Activated CD4-positive, alpha-beta memory T cell treated with anti-CD3 and anti-CD28 coated beads, Interleukin-2, amount 10 ng/mL, durations not matched to agents 7 days and 5 days (primary cell): ENCODE measurements at regions of chr17 and their contacts with region 1.

Region 1: GRCh38 chr17:43316522-43317142 is 82.2 kb upstream of the ARL4D start:
- DNase-seq: peak; percentile 43
- H3K4me3 Mint-ChIP-seq: no peak overlapping the region
- H3K27ac Mint-ChIP-seq: peak overlapping the region; percentile 61
- H3K4me1 Mint-ChIP-seq: peaks cover 17% of the 10 kb centered on the region
- H3K27me3 Mint-ChIP-seq: no peaks in the 10 kb centered on the region

Region 2: GRCh38 chr17:43006639-43007551 is 309.7 kb before region 1 on chr17 and contains the start of gene IFI35:
- CTCF ChIA-PET with region 1: interaction called, 4 read pairs
- POLR2A ChIA-PET with region 1: interaction called, 12 read pairs
- DNase-seq: peak; percentile 92
- H3K4me3 Mint-ChIP-seq: peak within 1 kb of the TSS; percentile 100
- H3K27ac Mint-ChIP-seq: peak within 1 kb of the TSS; percentile 100
- H3K4me1 Mint-ChIP-seq: peaks cover 34% of the 10 kb centered on the region
- H3K27me3 Mint-ChIP-seq: no peaks in the 10 kb centered on the region
- total RNA-seq, gene IFI35: 149 to 154 TPM

Region 3: GRCh38 chr17:43125133-43125966 is 191.3 kb before region 1 on chr17 and contains the start of gene BRCA1:
- CTCF ChIA-PET with region 1: no interaction called
- POLR2A ChIA-PET with region 1: interaction called, 41 read pairs
- DNase-seq: peak; percentile 96
- H3K4me3 Mint-ChIP-seq: peak within 1 kb of the TSS; percentile 100
- H3K27ac Mint-ChIP-seq: peak within 1 kb of the TSS; percentile 91
- H3K4me1 Mint-ChIP-seq: peaks cover 38% of the 10 kb centered on the region
- H3K27me3 Mint-ChIP-seq: no peaks in the 10 kb centered on the region
- total RNA-seq, gene BRCA1: 62.5 to 66.5 TPM

Region 4: DNA sequence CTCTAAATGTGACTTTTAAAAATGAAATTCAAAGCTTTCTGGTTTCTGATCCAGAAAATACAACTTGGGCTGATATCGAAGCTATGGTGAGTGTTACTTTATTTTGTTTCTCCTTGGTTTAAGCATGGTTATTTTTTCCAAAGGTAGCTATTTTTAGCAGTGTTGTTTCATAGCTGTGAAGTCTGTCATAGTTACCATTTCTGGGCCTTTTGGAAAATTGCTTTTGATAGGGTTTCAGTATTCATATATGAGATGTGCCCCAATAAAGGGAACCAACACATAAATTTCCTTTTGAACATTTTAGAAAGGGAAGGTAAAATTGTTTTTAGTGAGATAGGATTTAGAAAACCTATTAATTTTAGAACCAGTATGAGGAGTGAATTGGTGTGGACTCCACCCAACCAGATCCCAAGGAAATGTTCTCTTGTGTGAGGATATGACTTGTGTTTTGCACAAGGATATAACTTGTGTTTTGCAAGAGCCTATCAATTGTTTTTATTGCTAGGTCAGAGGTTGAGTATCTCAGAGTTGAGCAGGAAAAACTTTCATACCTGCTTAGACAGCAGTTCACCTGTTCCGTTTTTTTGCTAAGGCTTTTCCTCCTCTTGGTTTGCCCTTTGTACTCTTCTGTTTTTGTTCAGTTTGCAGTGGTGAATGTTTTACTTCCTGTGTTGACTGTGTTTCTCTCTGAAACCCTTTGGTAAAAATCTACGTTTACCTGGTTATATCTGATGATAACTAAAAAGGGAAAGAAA is 140.6 kb before region 1 on chr17:
- CTCF ChIA-PET with region 1: no interaction called
- POLR2A ChIA-PET with region 1: interaction called, 54 read pairs
- DNase-seq: no peak
- H3K4me3 Mint-ChIP-seq: peak overlapping the region; percentile 12
- H3K27ac Mint-ChIP-seq: peak overlapping the region; percentile 77
- H3K4me1 Mint-ChIP-seq: peaks cover 42% of the 10 kb centered on the region
- H3K27me3 Mint-ChIP-seq: no peaks in the 10 kb centered on the region

Region 5: DNA sequence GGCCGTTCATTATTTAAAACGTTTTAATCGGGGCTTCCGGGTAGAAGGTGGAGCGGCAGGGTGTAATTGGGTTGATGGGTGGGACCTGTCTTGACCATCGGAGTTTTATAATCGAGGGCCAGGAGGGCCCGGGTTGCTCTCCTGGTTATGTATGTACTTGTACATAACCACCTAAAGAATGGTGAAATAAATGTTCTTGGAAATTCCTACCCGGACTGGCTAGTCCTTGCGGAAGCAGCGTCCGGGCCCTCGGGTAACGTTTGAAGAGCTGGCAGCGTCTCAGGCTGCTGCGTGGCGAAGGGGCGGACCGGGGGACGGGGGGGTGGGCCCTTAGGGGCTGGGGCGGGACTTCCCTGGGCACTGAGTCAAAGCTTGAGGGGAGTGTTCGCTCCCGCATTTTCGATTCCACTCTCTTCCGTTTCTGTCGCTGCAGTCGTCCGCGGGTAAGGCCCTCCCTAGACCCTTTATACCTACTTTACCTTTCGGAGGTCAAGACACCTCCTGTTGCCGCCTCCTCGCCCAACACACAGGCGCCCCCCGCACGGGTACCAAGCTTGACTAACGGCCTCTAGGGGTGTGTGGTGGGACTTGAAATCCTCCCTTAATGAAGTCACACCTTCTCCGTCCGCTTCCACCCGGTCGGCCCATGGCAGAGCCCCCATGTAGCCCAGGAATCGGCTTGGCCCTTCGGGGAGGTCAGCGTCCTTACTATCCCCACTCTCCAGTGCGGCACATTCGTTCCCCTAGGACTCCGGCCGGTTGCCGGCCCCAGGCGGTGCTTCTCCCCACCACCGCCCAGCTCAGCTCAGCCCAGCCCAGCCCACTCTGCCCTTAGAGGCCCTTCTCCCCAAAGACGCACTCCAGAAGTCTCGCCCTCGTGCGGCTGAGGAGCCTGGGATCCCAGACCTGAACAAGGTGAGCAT is 104.9 kb before region 1 on chr17 and contains the start of gene TMEM106A:
- CTCF ChIA-PET with region 1: no interaction called
- POLR2A ChIA-PET with region 1: interaction called, 150 read pairs
- DNase-seq: peak; percentile 80
- H3K4me3 Mint-ChIP-seq: peak within 1 kb of the TSS; percentile 81
- H3K27ac Mint-ChIP-seq: peak within 1 kb of the TSS; percentile 82
- H3K4me1 Mint-ChIP-seq: peaks cover 31% of the 10 kb centered on the region
- H3K27me3 Mint-ChIP-seq: no peaks in the 10 kb centered on the region
- total RNA-seq, gene TMEM106A: 12.9 to 13.8 TPM

Region 6: DNA sequence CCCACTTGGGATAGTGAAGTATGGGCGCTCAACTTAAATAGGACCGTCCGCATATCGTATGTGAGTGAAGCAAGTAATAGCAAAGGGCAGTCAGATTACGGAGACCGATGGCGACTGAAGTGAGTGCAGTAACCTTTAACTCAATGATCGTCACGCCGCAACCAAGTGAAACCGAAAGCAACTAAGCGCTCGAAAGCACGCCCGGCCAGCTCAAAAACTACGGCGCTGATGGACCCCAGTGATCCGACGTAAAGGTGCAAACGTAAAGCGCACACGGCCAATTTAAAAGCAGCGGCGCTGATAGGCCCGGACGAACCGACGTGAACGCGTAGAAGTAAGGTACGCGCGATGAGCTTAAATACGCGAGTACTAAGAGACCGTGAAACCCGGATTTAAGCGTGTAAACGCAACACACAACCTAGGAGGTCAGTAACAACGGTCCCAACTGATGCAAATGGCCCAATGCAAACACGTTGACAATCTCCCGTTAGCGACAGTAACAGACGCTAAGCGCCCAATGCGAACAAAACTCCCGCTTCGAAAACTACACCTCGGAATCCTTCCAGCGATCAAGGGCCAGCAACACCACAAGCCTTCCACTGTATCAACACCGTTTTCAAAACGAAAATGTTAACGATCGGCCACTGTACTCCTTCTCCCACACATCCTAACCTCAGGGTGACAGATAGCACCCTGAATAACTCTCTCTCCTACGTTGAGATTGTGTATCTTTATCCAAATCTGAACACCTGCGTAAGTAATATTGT is 44.3 kb after region 1 on chr17:
- CTCF ChIA-PET with region 1: no interaction called
- POLR2A ChIA-PET with region 1: interaction called, 163 read pairs
- DNase-seq: peak; percentile 94
- H3K4me3 Mint-ChIP-seq: peak overlapping the region; percentile 85
- H3K27ac Mint-ChIP-seq: peak overlapping the region; percentile 99
- H3K4me1 Mint-ChIP-seq: peaks cover 41% of the 10 kb centered on the region
- H3K27me3 Mint-ChIP-seq: peaks cover 3% of the 10 kb centered on the region

Region 7: DNA sequence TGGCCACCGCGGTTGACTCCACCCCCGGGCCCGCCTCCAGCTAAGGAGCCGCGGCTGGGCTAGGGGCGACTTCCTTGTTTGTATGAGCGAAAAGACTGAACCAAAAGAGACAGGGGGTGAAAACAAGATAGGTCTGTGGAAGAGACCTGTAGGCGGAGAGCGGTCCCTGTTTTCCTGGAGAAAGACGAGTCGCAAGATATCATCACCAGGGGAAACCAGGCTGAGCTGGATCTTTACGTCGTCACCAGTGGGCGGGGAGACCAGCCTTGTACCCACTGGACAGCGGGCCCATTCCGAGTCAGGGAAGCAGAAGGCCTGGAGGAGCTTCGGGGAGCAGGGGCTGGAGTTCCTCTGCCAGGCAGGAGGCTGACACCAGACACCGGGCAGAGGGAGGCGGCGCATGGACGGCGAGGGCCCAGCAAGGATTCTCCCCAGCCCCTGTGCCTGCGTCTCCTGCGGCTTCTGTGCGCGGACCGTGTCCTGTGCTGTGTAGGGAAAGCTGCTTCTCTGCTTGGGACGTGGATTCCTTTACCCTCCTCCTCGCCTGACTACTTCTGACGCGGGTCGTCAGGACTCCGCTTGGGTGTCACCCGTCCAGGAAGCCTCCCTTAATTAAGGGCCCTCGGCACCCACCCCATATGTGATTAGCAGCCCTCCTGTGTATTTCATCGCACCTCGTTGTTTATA is 71.9 kb after region 1 on chr17:
- CTCF ChIA-PET with region 1: no interaction called
- POLR2A ChIA-PET with region 1: interaction called, 17 read pairs
- DNase-seq: peak; percentile 93
- H3K4me3 Mint-ChIP-seq: peak overlapping the region; percentile 85
- H3K27ac Mint-ChIP-seq: peak overlapping the region; percentile 98
- H3K4me1 Mint-ChIP-seq: peaks cover 18% of the 10 kb centered on the region
- H3K27me3 Mint-ChIP-seq: no peaks in the 10 kb centered on the region